Gastrocnemius medialis (tissue), 4 donors: ENCODE measurements at regions of chr10 and their contacts with region 1.

Region 1: DNA sequence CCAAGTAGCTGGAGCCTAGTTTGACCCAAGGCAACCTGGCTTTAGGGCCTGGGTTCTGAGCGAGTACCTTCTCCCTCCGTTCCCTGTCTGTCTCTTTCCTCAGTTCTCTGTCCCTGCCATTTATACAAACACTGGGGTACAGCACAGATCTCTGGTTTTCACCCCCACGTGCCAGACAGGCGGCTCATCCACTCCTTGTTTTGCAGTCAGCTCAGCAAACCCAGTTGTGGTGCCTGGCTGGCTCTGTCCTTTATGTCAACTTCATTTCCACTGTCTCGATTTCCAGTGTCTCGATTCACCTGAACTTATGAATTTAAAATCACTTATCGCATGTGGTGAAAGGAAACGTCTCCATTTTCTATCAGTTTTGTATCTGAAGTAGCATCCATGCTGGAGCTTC is 230.8 kb downstream of the FRMD4A start:
- DNase-seq: no peak
- ATAC-seq: no peak
- H3K4me3 ChIP-seq: no peak overlapping the region
- H3K27ac ChIP-seq: no peak overlapping the region
- H3K4me1 ChIP-seq: no peaks in the 10 kb centered on the region
- H3K27me3 ChIP-seq: no peaks in the 10 kb centered on the region
- CTCF ChIP-seq: no peak
- POLR2A ChIP-seq: no peak

Region 2: GRCh38 chr10:13268841-13269240 is 831.0 kb before region 1 on chr10:
- in situ Hi-C with region 1: no loop called
- intact Hi-C with region 1: no loop called
- DNase-seq: no peak
- ATAC-seq: no peak
- H3K4me3 ChIP-seq: no peak overlapping the region
- H3K27ac ChIP-seq: no peak overlapping the region
- H3K4me1 ChIP-seq: peaks cover 16% of the 10 kb centered on the region in 2 donors
- H3K27me3 ChIP-seq: no peaks in the 10 kb centered on the region
- CTCF ChIP-seq: no peak
- POLR2A ChIP-seq: no peak

Region 3: GRCh38 chr10:13787015-13787421 is 312.9 kb before region 1 on chr10:
- in situ Hi-C with region 1: loop called in 3 of 4 experiments (anchors 5 to 25 kb)
- intact Hi-C with region 1: no loop called
- DNase-seq: no peak
- ATAC-seq: peak in 1 of 2 donors; percentile 15
- H3K4me3 ChIP-seq: no peak overlapping the region
- H3K27ac ChIP-seq: peak overlapping the region; percentile 21 to 76 (median 39)
- H3K4me1 ChIP-seq: peaks cover 8 to 25% of the 10 kb centered on the region in 2 donors
- H3K27me3 ChIP-seq: no peaks in the 10 kb centered on the region
- CTCF ChIP-seq: no peak
- POLR2A ChIP-seq: no peak

Region 4: GRCh38 chr10:13984647-13985155 is 115.2 kb before region 1 on chr10:
- in situ Hi-C with region 1: no loop called
- intact Hi-C with region 1: loop called (anchors 5 kb)
- DNase-seq: no peak
- ATAC-seq: no peak
- H3K4me3 ChIP-seq: no peak overlapping the region
- H3K27ac ChIP-seq: no peak overlapping the region
- H3K4me1 ChIP-seq: peaks cover 0 to 8% of the 10 kb centered on the region in 2 donors
- H3K27me3 ChIP-seq: no peaks in the 10 kb centered on the region
- CTCF ChIP-seq: no peak
- POLR2A ChIP-seq: no peak